Activated CD4-positive, alpha-beta memory T cell treated with anti-CD3 and anti-CD28 coated beads, Interleukin-2, amount 10 ng/mL, durations not matched to agents 7 days and 5 days (primary cell): ENCODE measurements at regions of chr10 and their contacts with region 1.

Region 1: GRCh38 chr10:14560274-14560673 is 214.4 kb downstream of the FAM107B start:
- DNase-seq: peak; percentile 81
- H3K4me3 Mint-ChIP-seq: peak overlapping the region; percentile 46
- H3K27ac Mint-ChIP-seq: peak overlapping the region; percentile 95
- H3K4me1 Mint-ChIP-seq: peaks cover 91% of the 10 kb centered on the region
- H3K27me3 Mint-ChIP-seq: no peaks in the 10 kb centered on the region

Region 2: GRCh38 chr10:14486777-14487487 is 73.3 kb before region 1 on chr10:
- CTCF ChIA-PET with region 1: no interaction called
- POLR2A ChIA-PET with region 1: no interaction called
- DNase-seq: no peak
- H3K4me3 Mint-ChIP-seq: no peak overlapping the region
- H3K27ac Mint-ChIP-seq: no peak overlapping the region
- H3K4me1 Mint-ChIP-seq: peaks cover 2% of the 10 kb centered on the region
- H3K27me3 Mint-ChIP-seq: peaks cover 32% of the 10 kb centered on the region

Region 3: GRCh38 chr10:14543046-14543903 is 17.0 kb before region 1 on chr10:
- CTCF ChIA-PET with region 1: interaction called, 10 read pairs
- POLR2A ChIA-PET with region 1: interaction called, 17 read pairs
- DNase-seq: no peak
- H3K4me3 Mint-ChIP-seq: peak overlapping the region; percentile 14
- H3K27ac Mint-ChIP-seq: peak overlapping the region; percentile 54
- H3K4me1 Mint-ChIP-seq: peaks cover 77% of the 10 kb centered on the region
- H3K27me3 Mint-ChIP-seq: no peaks in the 10 kb centered on the region

Region 4: GRCh38 chr10:14571866-14572507 is 11.7 kb after region 1 on chr10:
- CTCF ChIA-PET with region 1: interaction called, 7 read pairs
- POLR2A ChIA-PET with region 1: interaction called, 33 read pairs
- DNase-seq: peak; percentile 68
- H3K4me3 Mint-ChIP-seq: peak overlapping the region; percentile 77
- H3K27ac Mint-ChIP-seq: peak overlapping the region; percentile 89
- H3K4me1 Mint-ChIP-seq: peaks cover 95% of the 10 kb centered on the region
- H3K27me3 Mint-ChIP-seq: no peaks in the 10 kb centered on the region

Region 5: GRCh38 chr10:14578060-14578952 is 18.0 kb after region 1 on chr10:
- CTCF ChIA-PET with region 1: interaction called, 8 read pairs
- POLR2A ChIA-PET with region 1: interaction called, 53 read pairs
- DNase-seq: no peak
- H3K4me3 Mint-ChIP-seq: no peak overlapping the region
- H3K27ac Mint-ChIP-seq: no peak overlapping the region
- H3K4me1 Mint-ChIP-seq: peaks cover 81% of the 10 kb centered on the region
- H3K27me3 Mint-ChIP-seq: no peaks in the 10 kb centered on the region

Region 6: DNA sequence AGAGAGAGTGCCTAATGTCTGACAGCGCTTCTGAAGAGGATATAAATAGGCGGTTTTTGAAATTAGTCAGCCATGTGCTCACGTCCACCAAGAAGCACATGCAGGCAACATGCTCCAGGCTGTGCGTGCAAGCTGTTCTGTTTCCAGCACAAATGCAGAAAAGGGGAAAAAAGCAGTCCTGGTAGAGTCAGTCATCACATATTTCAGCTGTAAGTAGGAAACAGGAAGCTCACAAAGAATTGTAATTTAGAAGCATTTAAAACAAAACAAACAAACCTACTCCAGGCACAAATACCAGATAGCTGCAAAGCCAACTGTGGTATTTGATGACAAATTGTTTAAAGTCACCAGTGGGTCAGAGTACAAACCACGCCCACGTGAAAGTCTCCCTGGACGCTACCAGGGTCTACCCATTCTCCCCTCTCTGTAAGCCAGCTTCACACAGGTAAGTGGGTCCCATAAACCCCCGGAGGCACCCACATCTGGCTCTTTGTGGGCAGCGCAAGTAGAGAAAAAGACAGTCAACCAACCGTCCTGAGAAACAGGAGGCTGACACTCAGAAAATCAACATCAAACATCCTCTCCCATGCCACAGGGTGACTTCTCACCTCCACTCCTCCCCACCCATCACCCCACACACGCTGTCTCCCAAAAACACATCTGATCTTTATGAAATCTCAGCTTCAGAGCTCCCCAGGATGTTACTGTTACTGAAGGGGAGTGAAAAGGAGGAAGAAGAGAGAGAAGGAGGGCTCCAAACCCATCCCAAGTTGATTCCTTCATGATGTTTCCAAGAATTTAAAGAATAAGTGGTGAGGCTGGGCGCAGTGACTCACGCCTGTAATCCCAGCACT is 28.0 kb after region 1 on chr10:
- CTCF ChIA-PET with region 1: interaction called, 8 read pairs
- POLR2A ChIA-PET with region 1: interaction called, 53 read pairs
- DNase-seq: peak; percentile 66
- H3K4me3 Mint-ChIP-seq: peak overlapping the region; percentile 47
- H3K27ac Mint-ChIP-seq: peak overlapping the region; percentile 96
- H3K4me1 Mint-ChIP-seq: peaks cover 93% of the 10 kb centered on the region
- H3K27me3 Mint-ChIP-seq: no peaks in the 10 kb centered on the region

Region 7: DNA sequence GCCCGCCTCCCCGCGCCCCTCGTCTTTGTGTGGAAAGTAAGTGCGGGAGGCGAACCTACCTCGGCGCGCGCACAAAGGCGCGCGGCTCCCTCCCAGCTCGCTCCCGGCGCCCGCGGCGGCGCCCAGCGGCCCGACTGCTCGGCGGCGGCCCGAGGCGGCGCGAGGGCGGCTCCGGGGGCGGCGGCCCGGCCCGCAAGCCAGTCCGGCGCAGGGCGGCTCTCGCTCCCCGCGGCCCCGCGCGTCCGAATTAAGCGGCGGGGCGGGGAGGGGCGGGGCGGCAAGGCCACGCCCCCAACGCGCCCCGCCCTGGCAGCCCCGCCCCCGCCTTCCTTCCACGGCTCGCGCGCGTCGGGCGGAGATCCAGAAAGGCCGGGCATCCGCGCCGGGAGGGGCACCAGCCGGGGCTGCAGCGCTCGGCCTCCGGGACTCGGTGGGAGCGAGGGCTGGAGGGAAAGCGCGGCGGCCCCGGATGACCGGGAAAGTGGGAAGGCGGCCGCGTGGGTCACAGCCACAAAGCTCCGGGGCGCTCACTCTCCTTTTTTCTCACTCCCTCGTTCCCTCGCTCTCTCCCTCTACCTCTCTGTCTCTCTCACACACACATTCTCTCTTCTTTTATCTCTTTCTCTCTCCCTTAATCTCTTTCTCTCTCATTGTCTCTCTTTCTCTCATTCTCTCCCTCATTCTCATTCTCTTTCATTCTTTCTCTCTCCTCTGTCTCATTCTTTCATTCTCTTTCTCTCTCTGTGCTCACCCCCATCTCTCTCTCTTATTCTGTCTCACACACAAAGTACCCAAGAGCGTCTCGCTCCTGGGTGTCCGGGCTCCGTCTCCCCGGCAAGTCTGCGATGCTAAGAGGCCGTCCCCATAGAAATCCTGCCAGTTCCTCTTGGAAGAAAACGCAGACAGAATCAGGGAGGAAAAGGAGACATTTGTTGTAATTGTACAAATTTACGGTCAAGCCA is 44.2 kb after region 1 on chr10:
- CTCF ChIA-PET with region 1: interaction called, 4 read pairs
- POLR2A ChIA-PET with region 1: interaction called, 16 read pairs
- DNase-seq: peak; percentile 77
- H3K4me3 Mint-ChIP-seq: peak overlapping the region; percentile 94
- H3K27ac Mint-ChIP-seq: peak overlapping the region; percentile 89
- H3K4me1 Mint-ChIP-seq: peaks cover 58% of the 10 kb centered on the region
- H3K27me3 Mint-ChIP-seq: no peaks in the 10 kb centered on the region

Region 8: DNA sequence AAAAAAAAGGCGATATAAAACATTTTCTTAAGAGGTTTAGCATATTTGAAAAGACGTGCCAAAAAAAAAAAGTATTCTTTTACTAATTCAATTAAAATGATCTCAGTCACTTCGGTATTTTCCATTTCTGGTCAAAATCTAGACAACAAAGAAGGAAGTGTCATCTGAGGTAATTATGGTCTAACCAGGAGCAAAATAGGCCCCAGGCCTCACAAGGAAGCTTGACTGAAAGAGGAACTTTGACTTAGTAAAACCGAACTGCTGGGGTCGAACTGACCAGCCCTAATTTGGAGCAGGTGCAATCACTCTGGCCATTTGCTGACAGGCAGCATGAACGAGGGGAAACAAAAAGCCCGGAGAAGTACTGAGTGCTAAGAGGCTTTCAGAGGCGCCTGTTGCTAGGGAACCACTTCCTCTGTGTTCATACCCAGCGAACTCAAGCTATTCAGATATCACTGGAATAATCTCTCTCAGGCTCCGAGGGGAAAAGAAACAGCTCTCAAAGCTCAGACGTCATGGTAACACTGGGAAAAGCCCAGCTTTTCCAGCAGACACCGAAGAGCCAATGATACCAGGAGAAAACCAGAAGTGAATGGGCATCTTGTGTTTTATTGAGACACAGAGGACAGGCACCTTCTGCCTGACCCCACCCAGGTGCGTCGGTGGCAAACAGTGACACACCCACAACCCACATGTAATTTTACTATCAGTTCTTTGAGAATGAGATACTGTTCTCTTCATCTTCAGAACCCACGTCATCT is 87.9 kb after region 1 on chr10:
- CTCF ChIA-PET with region 1: no interaction called
- POLR2A ChIA-PET with region 1: interaction called, 12 read pairs
- DNase-seq: peak; percentile 79
- H3K4me3 Mint-ChIP-seq: peak overlapping the region; percentile 75
- H3K27ac Mint-ChIP-seq: peak overlapping the region; percentile 96
- H3K4me1 Mint-ChIP-seq: peaks cover 72% of the 10 kb centered on the region
- H3K27me3 Mint-ChIP-seq: no peaks in the 10 kb centered on the region